ENCODE measurements at regions of chr13 and their contacts with region 1.

Region 1: DNA sequence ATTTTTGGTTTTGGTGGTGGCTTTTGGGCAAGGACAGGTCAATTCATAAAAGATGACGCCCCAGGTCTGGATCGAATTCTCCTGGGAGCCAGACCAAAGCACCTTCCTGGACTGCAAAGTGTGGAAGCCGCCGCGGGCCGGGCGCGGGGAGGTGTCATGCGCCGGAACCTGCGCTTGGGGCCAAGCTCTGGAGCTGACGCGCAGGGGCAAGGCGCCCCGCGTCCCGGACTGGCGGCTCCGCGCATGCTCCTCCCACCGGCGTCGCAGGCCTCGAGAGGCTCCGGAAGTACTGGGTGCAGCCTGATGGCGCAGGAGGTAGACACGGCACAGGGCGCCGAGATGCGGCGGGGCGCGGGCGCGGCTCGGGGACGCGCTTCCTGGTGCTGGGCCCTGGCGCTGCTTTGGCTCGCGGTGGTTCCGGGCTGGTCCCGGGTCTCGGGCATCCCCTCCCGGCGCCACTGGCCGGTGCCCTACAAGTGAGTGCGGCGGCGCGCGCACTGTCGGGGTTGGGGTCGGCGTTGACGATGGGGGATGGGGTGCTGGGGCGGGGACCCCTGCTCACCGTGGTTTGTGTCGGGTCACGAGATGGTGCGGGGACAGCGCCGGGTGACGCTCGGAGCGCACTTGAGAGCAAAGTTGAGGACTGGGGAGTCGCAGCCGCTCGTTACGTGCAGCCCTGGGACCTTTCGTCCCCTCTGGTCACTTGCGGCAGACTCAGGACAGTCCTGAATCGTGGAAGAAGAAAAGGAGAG is at the start of gene CLN5:
- DNase-seq: peak; percentile 93 to 97 (median 96)
- ATAC-seq: peak; percentile 97 to 99 (median 98)
- H3K4me3 ChIP-seq: peak within 1 kb of the TSS; percentile 60 to 94 (median 78)
- H3K27ac ChIP-seq: peak within 1 kb of the TSS; percentile 85 to 95 (median 90)
- H3K4me1 ChIP-seq: peaks cover 0 to 25% (median 11%) of the 10 kb centered on the region in 12 donors
- H3K27me3 ChIP-seq: no peaks in the 10 kb centered on the region
- CTCF ChIP-seq: no peak
- POLR2A ChIP-seq: peak in 1 of 2 donors; percentile 93
- total RNA-seq, gene CLN5: 12.3 to 19.1 (median 15.9) TPM

Region 2: DNA sequence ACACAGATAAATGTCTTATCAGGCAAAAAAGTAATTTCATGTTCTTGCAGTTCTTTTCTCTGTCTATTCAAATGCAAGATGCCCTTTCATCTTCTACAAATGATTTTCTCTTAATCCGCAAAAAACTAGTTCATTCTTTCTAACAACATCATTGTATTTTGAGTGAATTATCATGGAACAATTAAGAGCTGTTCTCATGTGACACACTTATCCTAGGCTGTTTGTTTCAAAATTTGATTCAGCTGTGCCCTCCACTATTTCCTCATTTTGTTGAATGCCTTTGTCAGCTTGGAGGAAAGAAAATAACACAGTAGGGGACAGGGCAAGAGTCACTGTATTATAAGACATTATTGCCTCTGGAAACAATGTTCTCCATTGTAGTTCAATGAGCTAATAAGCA is 502.7 kb before region 1 on chr13:
- intact Hi-C with region 1: no loop called
- DNase-seq: no peak
- ATAC-seq: no peak
- H3K4me3 ChIP-seq: no peak overlapping the region
- H3K27ac ChIP-seq: no peak overlapping the region
- H3K4me1 ChIP-seq: no peaks in the 10 kb centered on the region
- H3K27me3 ChIP-seq: no peaks in the 10 kb centered on the region
- CTCF ChIP-seq: no peak
- POLR2A ChIP-seq: no peak

Region 3: DNA sequence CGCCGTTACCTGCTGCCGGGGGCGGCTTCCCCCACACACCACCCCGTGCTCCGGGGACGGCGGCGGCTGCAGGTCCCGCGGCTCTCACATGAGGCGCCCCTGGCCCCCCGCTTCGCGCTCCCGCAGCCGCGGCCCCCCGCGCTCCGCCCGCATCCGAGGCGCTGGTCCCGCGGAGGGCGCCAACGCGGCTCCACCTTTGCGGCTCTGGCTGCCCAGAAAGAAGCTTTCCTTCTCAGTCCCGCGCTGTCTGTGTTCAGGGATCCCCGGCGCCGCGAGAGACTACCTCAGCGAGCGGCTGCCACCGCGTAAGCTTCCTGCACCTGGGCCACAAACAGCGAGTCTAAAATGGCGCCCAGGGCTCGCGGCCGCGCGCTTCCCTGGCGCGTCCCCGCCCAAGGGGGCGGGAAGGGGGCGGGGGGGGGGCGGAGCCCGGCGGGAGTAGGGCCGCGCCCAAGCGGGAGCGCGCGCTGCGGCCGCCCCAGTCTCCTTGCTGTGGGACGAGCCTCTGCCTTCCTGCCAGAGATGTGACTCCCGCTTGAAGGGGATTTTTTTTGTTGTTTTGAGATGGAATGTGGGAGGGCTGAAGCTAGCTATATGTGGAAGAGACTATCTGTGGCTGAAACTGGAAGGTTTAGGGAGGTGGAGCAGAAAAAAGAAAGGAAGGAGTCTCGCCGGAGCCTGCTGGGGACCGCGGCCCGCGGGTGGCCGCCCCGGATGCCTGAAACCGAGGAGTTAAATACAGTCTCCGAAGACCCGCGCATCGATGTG is 35.0 kb after region 1 on chr13 and contains the start of gene FBXL3:
- intact Hi-C with region 1: loop called in 3 of 10 experiments (anchors 1 to 2 kb)
- DNase-seq: peak; percentile 88 to 93 (median 89)
- ATAC-seq: peak; percentile 84 to 91 (median 90)
- H3K4me3 ChIP-seq: peak within 1 kb of the TSS; percentile 83 to 100 (median 96)
- H3K27ac ChIP-seq: peak within 1 kb of the TSS; percentile 96 to 100 (median 100)
- H3K4me1 ChIP-seq: peaks cover 6 to 60% (median 42%) of the 10 kb centered on the region in 12 donors
- H3K27me3 ChIP-seq: no peaks in the 10 kb centered on the region
- CTCF ChIP-seq: no peak
- POLR2A ChIP-seq: peak in 1 of 2 donors; percentile 55
- total RNA-seq, gene FBXL3: 27.5 to 50.0 (median 32.1) TPM

Region 4: DNA sequence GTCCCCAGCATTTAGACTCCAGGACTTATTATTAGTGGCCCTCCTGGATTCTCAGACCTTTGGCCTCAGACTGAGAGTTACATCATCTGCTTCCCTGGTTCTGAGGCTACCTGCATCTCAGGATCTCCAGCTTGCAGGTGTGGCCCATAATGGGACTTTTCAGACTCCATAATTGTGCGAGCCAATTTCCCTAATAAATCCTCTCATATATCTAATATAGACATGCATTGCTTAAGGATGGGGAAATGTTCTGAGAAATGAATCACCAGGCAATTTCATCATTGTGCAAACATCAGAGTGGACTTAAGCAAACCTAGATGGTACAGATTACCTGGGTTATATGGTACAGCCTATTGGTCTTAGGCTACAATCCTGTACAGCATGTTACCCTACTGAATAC is 151.5 kb after region 1 on chr13:
- intact Hi-C with region 1: no loop called
- DNase-seq: no peak
- ATAC-seq: no peak
- H3K4me3 ChIP-seq: no peak overlapping the region
- H3K27ac ChIP-seq: no peak overlapping the region
- H3K4me1 ChIP-seq: no peaks in the 10 kb centered on the region
- H3K27me3 ChIP-seq: no peaks in the 10 kb centered on the region
- CTCF ChIP-seq: no peak
- POLR2A ChIP-seq: no peak

Measured in heart left ventricle (tissue), 16 donors.